Activated CD4-positive, alpha-beta memory T cell treated with anti-CD3 and anti-CD28 coated beads for 36 hours (primary cell): ENCODE measurements at regions of chr10 and their contacts with region 1.

Region 1: DNA sequence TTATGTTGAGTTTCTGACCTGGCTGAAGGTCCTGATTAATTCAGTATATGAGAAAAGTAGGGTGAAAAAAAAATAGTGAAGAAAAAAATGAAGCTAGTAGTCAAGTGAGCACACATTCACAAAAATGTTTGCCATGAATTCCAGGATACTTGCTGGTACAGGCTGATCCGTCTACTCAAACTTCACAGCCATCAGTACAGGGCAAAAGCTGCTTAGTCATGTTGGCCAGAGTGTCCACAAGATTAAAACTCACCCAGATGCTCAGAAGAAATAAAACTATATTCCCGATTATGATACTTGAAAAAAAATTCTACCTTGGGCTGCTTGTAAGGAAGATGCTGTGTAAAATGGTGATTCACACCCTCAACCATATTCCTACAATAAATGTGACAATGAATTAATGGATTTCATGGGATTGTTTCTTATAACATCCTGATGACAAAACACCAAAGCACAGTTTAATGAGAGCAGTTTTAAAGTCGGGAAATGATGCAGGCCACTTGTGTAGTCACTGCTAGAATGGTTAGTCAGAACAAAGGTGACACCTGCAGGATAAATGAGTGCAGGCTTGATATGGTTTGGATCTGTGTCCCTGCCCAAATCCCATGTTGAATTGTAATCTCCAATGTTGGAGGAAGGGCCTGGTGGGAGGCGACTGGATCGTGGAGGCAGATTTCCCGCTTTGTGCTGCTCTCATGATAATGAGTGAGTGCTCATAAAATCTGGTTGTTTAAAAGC is 49.2 kb upstream of the ANKRD1 start:
- DNase-seq: no peak
- H3K4me3 Mint-ChIP-seq: no peak overlapping the region
- H3K27ac Mint-ChIP-seq: no peak overlapping the region
- H3K4me1 Mint-ChIP-seq: no peaks in the 10 kb centered on the region
- H3K27me3 Mint-ChIP-seq: peaks cover 4% of the 10 kb centered on the region

Region 2: DNA sequence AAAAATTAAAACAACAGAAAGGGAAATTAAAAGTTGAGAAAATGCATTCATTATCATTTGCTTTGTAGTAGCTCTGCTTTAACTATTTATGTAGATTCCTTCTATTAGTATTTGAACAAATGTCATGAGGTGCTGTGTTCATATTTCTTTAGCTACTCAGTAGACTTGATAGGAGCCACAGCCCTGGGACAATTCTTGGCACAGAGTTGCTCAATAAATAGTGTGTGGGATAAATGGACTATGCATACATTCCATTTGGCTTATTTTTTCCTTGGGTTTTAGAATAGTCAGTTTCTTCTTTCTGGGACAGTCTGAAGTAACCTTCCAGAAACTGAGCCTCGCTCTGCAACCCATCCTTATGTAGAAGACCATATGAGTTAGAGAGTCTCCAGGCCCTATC is 84.9 kb before region 1 on chr10:
- CTCF ChIA-PET with region 1: no interaction called
- POLR2A ChIA-PET with region 1: no interaction called
- intact Hi-C with region 1: no loop called
- DNase-seq: no peak
- H3K4me3 Mint-ChIP-seq: no peak overlapping the region
- H3K27ac Mint-ChIP-seq: no peak overlapping the region
- H3K4me1 Mint-ChIP-seq: no peaks in the 10 kb centered on the region
- H3K27me3 Mint-ChIP-seq: no peaks in the 10 kb centered on the region

Region 3: DNA sequence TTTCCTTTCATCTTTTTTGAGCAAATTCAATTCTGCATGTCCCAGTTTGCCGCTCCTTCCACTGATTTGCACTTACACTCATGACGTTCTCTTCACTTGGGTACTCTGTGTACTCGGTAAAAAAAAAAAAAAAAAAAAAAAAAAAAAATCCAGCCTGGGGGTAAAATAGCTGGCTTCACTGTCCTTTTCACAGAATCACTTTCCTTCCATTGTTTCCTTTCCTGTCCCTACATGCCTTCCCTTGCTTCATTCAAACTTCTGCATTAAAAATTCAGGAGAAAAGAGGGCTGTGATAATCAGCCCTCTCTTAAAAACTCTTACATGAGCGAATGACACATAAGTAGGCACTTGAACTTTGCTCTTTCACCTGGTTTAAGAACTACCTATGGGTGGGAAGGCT is 57.9 kb before region 1 on chr10:
- CTCF ChIA-PET with region 1: interaction called, 5 read pairs
- POLR2A ChIA-PET with region 1: no interaction called
- intact Hi-C with region 1: loop called (anchors 1 kb)
- DNase-seq: no peak
- H3K4me3 Mint-ChIP-seq: no peak overlapping the region
- H3K27ac Mint-ChIP-seq: no peak overlapping the region
- H3K4me1 Mint-ChIP-seq: peaks cover 2% of the 10 kb centered on the region
- H3K27me3 Mint-ChIP-seq: no peaks in the 10 kb centered on the region